Dendritic cell treated with granulocyte-macrophage colony-stimulating factor and Interleukin-4, amounts not matched to agents 40 ng/mL and 50 ng/mL, for 4 days (primary cell): ENCODE measurements at regions of chr9 and their contacts with region 1.

Region 1: GRCh38 chr9:88388172-88388885 is at the start of gene SPIN1:
- H3K4me3 Mint-ChIP-seq: peak within 1 kb of the TSS; percentile 89
- H3K27ac Mint-ChIP-seq: peak within 1 kb of the TSS; percentile 91
- H3K4me1 Mint-ChIP-seq: peaks cover 43% of the 10 kb centered on the region
- H3K27me3 Mint-ChIP-seq: no peaks in the 10 kb centered on the region

Region 2: GRCh38 chr9:87973730-87974292 is 414.5 kb before region 1 on chr9:
- intact Hi-C with region 1: loop called (anchors 10 kb)
- H3K4me3 Mint-ChIP-seq: peak overlapping the region; percentile 87
- H3K27ac Mint-ChIP-seq: peak overlapping the region; percentile 94
- H3K4me1 Mint-ChIP-seq: peaks cover 19% of the 10 kb centered on the region
- H3K27me3 Mint-ChIP-seq: peaks cover 15% of the 10 kb centered on the region

Region 3: GRCh38 chr9:88173378-88173999 is 214.8 kb before region 1 on chr9:
- intact Hi-C with region 1: loop called (anchors 5 kb)
- H3K4me3 Mint-ChIP-seq: no peak overlapping the region
- H3K27ac Mint-ChIP-seq: no peak overlapping the region
- H3K4me1 Mint-ChIP-seq: peaks cover 21% of the 10 kb centered on the region
- H3K27me3 Mint-ChIP-seq: peaks cover 1% of the 10 kb centered on the region

Region 4: DNA sequence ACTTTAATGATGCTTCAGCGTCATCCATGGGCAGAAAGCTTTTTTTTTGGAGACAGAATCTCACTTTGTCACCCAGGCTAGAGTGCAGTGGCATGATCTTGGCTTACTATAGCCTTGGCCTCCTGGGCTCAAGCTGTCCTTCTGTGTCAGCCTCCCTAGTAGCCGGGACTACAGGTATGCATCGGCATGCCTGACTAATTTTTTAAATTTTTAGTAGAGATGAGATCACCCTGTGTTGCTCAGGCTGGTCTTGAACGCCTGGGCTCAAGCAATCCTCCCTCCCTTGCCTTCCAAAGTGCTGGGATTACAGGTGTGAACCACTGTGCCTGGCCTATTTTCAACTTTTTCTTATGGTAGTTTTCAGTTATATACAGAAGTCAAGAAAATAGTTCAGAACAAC is 23.2 kb after region 1 on chr9:
- intact Hi-C with region 1: no loop called
- H3K4me3 Mint-ChIP-seq: no peak overlapping the region
- H3K27ac Mint-ChIP-seq: no peak overlapping the region
- H3K4me1 Mint-ChIP-seq: peaks cover 5% of the 10 kb centered on the region
- H3K27me3 Mint-ChIP-seq: no peaks in the 10 kb centered on the region